Heart left ventricle (tissue), 16 donors: ENCODE measurements at regions of chr7 and their contacts with region 1.

Region 1: GRCh38 chr7:44508328-44509030 is 18.0 kb upstream of the NUDCD3 start:
- DNase-seq: no peak
- ATAC-seq: no peak
- H3K4me3 ChIP-seq: no peak overlapping the region
- H3K27ac ChIP-seq: no peak overlapping the region
- H3K4me1 ChIP-seq: no peaks in the 10 kb centered on the region
- H3K27me3 ChIP-seq: no peaks in the 10 kb centered on the region
- CTCF ChIP-seq: no peak
- POLR2A ChIP-seq: no peak

Region 2: DNA sequence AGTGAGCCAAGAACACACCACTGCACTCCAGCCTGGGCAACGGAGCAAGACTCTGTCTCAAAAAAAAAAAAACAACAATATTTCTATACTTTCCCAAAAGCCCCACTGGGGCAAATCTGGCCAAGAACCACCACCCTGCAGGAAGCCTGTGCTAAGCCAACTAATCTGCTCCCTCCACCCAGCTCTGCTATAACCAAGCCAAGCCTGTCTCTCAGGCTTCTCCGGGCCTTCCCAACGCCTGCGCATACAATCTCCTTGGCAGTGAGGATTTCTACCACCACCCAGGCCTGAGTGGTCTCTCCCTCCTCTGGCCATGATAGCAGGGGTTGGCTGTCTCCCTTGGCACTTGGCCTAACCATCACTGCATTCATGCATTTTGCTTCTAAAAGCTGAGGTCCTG is 51.0 kb after region 1 on chr7:
- intact Hi-C with region 1: loop called in 1 of 10 experiments (anchors 5 kb)
- DNase-seq: no peak
- ATAC-seq: no peak
- H3K4me3 ChIP-seq: no peak overlapping the region
- H3K27ac ChIP-seq: no peak overlapping the region
- H3K4me1 ChIP-seq: no peaks in the 10 kb centered on the region
- H3K27me3 ChIP-seq: no peaks in the 10 kb centered on the region
- CTCF ChIP-seq: no peak
- POLR2A ChIP-seq: no peak